GM10248 (cell line): ENCODE measurements at regions of chr17 and their contacts with region 1.

Region 1: GRCh38 chr17:2416010-2416734 is 15.3 kb upstream of the MNT start:
- DNase-seq: peak; percentile 88
- CTCF ChIP-seq: peak; percentile 96

Region 2: DNA sequence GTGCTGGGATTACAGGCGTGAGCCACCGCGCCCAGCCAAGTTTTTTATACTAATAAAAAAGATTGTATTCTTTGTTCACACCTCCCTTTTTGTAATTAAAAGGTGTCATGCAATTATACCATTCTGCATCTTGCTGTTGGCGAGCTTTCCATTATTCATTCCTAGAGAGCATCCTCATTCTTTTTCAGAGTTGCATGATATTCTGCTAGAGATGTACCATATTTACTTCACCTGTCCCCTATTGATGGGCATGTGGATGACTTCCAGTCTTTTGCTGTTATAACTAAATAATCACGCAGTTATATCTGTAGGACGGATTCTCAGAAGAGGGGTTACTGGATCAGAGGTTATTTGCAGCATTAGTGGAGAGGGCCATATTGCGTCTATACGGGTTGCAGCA is 61.9 kb before region 1 on chr17:
- CTCF ChIA-PET with region 1: interaction called, 10 read pairs
- POLR2A ChIA-PET with region 1: no interaction called
- DNase-seq: no peak
- CTCF ChIP-seq: no peak

Region 3: DNA sequence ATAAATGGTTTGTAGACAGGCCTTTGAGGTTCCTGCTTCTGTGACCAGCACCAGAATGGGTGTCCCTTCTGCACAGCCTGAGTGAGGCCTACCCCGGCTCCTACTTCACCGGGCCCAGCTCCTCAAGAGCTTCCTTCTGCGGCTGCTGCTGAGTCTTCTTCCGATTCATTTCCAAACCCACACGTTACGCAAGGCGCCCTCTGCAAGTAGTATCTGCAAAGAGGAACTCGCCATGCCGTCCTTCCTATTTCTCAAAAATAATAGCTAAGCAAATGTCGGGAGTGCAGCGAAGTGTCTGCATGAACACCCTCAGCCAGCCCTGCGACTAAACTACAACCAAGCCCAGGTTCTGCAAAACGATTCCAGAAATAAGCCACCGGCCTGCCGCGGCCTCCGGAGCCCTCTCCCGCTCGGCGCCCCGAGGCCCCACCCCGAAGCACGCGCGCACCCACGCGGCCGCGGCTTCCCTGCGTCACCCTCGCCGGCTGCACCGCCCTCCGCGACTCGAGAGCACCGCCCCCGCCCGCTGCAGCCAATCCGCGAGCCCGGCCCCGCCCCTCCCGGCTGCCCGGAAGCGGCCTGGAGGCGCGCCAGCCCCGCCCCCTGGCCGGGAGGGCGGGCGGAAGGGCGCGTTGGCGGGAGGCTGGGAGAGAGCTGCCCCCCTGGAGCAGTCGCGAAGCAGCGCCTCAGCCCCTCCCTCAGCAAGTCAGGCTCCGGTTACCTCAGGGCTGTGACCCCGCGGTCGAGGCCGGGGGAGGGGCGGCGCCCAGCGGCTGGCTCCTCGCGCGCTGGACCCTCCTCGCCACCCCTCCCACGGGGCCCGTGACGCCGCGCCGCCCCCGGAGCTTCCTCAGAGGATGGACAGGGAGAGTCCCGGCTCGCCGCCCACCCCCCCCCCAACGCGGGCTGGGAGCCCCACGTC is 23.7 kb before region 1 on chr17:
- CTCF ChIA-PET with region 1: interaction called, 404 read pairs
- POLR2A ChIA-PET with region 1: interaction called, 4 read pairs
- DNase-seq: peak; percentile 95
- CTCF ChIP-seq: no peak

Region 4: GRCh38 chr17:2401426-2402221 is 14.5 kb before region 1 on chr17:
- CTCF ChIA-PET with region 1: interaction called, 75 read pairs
- POLR2A ChIA-PET with region 1: interaction called, 5 read pairs
- DNase-seq: peak; percentile 93
- CTCF ChIP-seq: no peak

Region 5: DNA sequence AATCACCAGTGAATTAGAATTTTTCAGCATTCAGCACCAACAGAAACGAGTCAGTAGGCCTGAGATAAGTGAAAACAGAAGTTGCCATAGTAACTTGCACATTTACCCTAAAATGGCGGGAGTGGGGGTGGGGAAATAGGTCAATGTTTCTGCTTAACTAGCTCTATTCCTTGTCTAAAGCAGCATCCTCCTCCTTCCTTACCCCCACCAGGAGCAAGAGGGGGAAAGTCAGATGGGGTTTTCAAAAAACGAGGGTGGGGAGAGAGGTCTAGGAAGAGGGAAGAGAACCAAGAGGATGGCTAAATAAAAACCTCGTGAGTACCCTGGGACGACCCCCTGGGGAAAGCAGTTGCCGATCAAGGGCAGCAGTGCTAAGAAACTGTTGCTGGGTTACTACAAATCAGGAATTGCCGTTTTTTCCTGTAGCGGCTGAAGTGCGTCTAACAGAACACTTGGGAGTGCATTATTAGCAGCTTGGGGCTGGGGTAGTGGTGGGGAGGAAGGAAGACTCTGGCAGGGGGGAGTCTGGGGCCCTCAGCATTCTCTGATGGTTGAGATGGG is 19.1 kb after region 1 on chr17:
- CTCF ChIA-PET with region 1: interaction called, 74 read pairs
- POLR2A ChIA-PET with region 1: no interaction called
- DNase-seq: no peak
- CTCF ChIP-seq: no peak

Region 6: DNA sequence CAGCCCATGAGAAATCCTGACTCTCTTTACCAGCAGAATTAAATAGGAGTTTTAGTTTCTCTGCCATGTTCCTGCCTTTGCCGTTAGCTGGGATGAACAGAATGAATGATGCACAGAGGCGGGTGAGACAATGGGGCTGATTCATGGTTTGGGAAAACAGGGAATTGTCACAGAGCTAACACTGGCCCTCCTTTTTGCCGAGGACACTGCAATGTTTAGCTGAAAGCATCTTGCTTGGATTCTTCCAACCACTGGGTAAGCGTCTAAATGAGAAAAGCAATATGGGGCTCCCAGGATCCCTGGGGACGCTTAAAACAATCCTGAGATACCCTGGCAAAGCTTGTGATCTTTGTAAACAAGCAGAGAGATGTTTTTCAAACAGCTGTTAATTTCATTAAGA is 164.5 kb after region 1 on chr17:
- CTCF ChIA-PET with region 1: no interaction called
- POLR2A ChIA-PET with region 1: no interaction called
- DNase-seq: no peak
- CTCF ChIP-seq: no peak

Region 7: DNA sequence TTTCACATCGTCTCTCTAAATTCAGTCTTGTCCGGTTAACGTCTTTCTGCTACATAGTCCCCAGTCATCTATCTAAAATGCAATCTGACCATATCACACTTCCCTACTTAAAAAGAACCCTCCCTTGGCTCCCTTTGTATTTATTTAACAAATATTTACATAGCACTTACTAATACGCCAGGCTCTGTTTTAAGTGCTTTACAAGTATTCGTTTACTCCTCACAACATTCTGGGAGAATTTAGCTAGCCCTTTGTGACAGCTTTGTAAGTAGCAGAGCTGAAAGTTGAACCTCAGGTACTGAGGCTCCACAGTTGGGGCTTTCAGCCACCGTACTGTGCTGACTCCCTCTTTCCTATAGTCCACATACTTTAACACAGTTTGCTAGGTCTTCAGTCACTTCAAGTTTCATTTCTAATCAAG is 186.4 kb after region 1 on chr17:
- CTCF ChIA-PET with region 1: no interaction called
- POLR2A ChIA-PET with region 1: no interaction called
- DNase-seq: no peak
- CTCF ChIP-seq: no peak

Region 8: DNA sequence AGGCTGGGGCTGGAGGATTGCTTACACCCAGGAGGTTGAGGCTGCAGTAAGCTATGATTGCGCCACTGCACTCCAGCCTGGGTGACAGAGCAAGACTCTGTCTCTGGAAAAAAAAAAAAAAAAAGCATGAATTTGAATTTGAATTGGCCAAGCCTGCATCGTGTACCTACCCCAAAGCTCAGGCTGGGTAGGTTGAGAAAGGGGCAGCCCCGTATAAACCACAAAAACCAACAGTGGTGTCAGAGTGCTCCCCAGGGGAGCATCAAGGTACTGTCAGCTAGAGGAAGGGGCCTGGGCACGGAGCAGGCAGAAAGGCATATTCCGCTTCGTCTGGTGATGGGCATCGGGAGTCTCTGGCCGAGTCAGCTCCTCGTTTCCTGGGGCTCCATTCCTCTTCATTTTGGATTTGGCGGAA is 421.0 kb after region 1 on chr17:
- CTCF ChIA-PET with region 1: no interaction called
- POLR2A ChIA-PET with region 1: no interaction called
- DNase-seq: peak; percentile 69
- CTCF ChIP-seq: peak; percentile 46